Mammary epithelial cell (primary cell): ENCODE measurements at regions of chr12 and their contacts with region 1.

Region 1: GRCh38 chr12:6873094-6874014 is at the start of gene SPSB2:
- DNase-seq: peak; percentile 89
- H3K4me3 ChIP-seq: peak within 1 kb of the TSS; percentile 68 to 88 (median 84)
- H3K27ac ChIP-seq: peak within 1 kb of the TSS; percentile 56
- H3K4me1 ChIP-seq: peaks cover 45% of the 10 kb centered on the region
- H3K27me3 ChIP-seq: no peaks in the 10 kb centered on the region
- CTCF ChIP-seq: no peak
- total RNA-seq, gene SPSB2: 7.8 to 9.8 TPM

Region 2: DNA sequence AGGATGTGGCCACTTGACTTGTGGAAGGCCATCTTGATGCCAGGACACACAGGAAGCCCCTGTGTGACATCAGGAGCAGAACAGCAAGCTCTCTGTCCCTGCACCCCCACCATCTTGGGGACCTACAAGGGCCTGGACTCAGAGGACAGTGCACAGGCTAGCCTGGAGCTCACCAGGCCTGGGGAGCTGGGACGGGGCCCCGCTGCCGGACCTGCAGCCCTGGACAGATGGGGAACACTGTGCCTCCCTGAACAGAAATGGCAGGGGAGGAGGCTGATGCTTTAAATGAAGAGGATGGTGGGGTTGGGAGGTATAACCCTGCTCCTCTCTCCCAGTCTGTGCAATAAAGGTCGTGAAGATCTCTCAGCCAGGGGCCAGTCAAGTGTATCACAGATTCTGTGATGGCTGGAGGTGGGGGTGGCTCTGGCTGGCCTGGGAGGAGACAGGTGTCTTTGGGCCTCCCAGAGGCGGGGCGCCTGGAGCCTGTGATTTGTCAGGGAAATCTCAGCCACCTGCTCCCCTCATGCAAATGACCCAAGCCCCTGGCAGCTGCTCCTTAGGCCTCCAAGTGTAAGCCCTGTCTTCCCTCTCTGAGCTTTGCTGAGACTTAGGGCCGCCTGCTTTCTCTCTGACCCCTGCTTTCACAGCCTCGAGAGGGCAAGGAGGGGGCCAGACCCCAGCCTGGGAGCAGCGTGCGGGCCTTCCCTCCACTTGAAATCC is 33.7 kb before region 1 on chr12:
- CTCF ChIA-PET with region 1: no interaction called
- dilution Hi-C with region 1: no loop called
- in situ Hi-C with region 1: no loop called
- intact Hi-C with region 1: no loop called
- DNase-seq: no peak
- H3K4me3 ChIP-seq: no peak overlapping the region
- H3K27ac ChIP-seq: no peak overlapping the region
- H3K4me1 ChIP-seq: no peaks in the 10 kb centered on the region
- H3K27me3 ChIP-seq: no peaks in the 10 kb centered on the region
- CTCF ChIP-seq: no peak

Region 3: GRCh38 chr12:6851921-6852650 is 21.3 kb before region 1 on chr12 and contains the start of gene USP5:
- CTCF ChIA-PET with region 1: interaction called, 10 read pairs
- dilution Hi-C with region 1: no loop called
- in situ Hi-C with region 1: no loop called
- intact Hi-C with region 1: loop called (anchors 1 kb)
- DNase-seq: peak; percentile 100
- H3K4me3 ChIP-seq: peak within 1 kb of the TSS; percentile 65 to 84 (median 78)
- H3K27ac ChIP-seq: peak within 1 kb of the TSS; percentile 84
- H3K4me1 ChIP-seq: peaks cover 20% of the 10 kb centered on the region
- H3K27me3 ChIP-seq: no peaks in the 10 kb centered on the region
- CTCF ChIP-seq: no peak
- total RNA-seq, gene USP5: 79.4 to 128 TPM